HCT116 (cell line): ENCODE measurements at regions of chr7 and their contacts with region 1.

Region 1: GRCh38 chr7:30740424-30741181 is 11.3 kb upstream of the INMT start:
- DNase-seq: peak; percentile 23
- ATAC-seq: peak; percentile 93
- H3K4me3 ChIP-seq: no peak overlapping the region
- H3K27ac ChIP-seq: no peak overlapping the region
- H3K4me1 ChIP-seq: no peaks in the 10 kb centered on the region
- H3K27me3 ChIP-seq: 0 out of 2 replicates have a peak, but pooled peaks cover 9% of the 10 kb centered on the region
- CTCF ChIP-seq: peak; percentile 87 to 99 (median 98)
- POLR2A ChIP-seq: no peak
- RAD21 ChIP-seq: peak; percentile 96

Region 2: GRCh38 chr7:30164567-30164966 is 576.0 kb before region 1 on chr7:
- CTCF ChIA-PET with region 1: no interaction called
- POLR2A ChIA-PET with region 1: no interaction called
- RAD21 ChIA-PET with region 1: no interaction called
- intact Hi-C with region 1: loop called (anchors 10 kb)
- DNase-seq: peak; percentile 33
- ATAC-seq: peak; percentile 68
- H3K4me3 ChIP-seq: no peak overlapping the region
- H3K27ac ChIP-seq: no peak overlapping the region
- H3K4me1 ChIP-seq: peaks cover 0 to 12% of the 10 kb centered on the region in 2 experiments; a peak in 2 of 4 replicates
- H3K27me3 ChIP-seq: no peaks in the 10 kb centered on the region
- CTCF ChIP-seq: peak; percentile 53 to 73 (median 64); a peak in 5 of 6 replicates
- POLR2A ChIP-seq: no peak
- RAD21 ChIP-seq: peak; percentile 87

Region 3: GRCh38 chr7:30548762-30549344 is 191.8 kb before region 1 on chr7:
- CTCF ChIA-PET with region 1: interaction called, 7 read pairs
- POLR2A ChIA-PET with region 1: no interaction called
- RAD21 ChIA-PET with region 1: no interaction called
- intact Hi-C with region 1: loop called (anchors 2 kb)
- DNase-seq: peak; percentile 52
- ATAC-seq: peak; percentile 77
- H3K4me3 ChIP-seq: no peak overlapping the region
- H3K27ac ChIP-seq: no peak overlapping the region
- H3K4me1 ChIP-seq: peaks cover 24 to 36% of the 10 kb centered on the region in 2 experiments
- H3K27me3 ChIP-seq: no peaks in the 10 kb centered on the region
- CTCF ChIP-seq: peak; percentile 63 to 86 (median 73); a peak in 5 of 6 replicates
- POLR2A ChIP-seq: no peak
- RAD21 ChIP-seq: peak; percentile 76